Activated CD4-positive, alpha-beta T cell treated with anti-CD3 and anti-CD28 coated beads for 36 hours (primary cell): ENCODE measurements at regions of chr2 and their contacts with region 1.

Region 1: DNA sequence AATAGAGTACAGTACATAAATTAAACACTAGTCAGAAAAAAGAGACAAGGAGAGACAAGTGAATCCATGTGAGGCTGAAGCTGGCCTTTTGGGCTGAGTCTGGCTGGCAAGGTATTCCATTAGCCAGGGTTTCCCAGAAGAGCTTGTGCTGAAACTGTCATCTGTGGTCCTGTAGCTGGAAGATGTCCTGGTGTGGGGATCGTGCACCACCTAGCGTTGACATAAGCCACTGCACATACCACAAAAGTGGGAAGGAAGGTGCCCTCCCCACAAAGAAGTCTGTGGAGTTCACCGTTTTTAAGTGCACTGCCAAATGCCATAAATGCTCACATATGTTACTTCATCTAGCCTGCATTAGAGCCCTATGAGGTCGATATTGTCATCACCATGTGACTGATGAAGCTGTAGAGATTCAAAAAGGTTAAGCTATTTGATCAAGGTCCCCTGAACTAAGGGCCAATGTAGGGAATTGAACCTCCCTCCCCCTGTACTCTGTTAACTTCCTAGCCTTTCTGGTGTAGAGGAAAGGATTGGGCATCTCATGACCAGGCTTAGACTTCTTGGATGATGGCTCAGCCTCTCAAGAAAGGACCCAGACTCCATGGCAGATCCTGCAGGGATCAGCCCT is 31.9 kb upstream of the GALNT14 start:
- DNase-seq: peak; percentile 73
- ATAC-seq: peak; percentile 88
- H3K4me3 Mint-ChIP-seq: no peak overlapping the region
- H3K27ac Mint-ChIP-seq: no peak overlapping the region
- H3K4me1 Mint-ChIP-seq: peaks cover under 1% of the 10 kb centered on the region
- H3K27me3 Mint-ChIP-seq: no peaks in the 10 kb centered on the region

Region 2: GRCh38 chr2:30862054-30862651 is 308.0 kb before region 1 on chr2:
- CTCF ChIA-PET with region 1: interaction called, 29 read pairs
- POLR2A ChIA-PET with region 1: no interaction called
- intact Hi-C with region 1: loop called (anchors 1 kb)
- DNase-seq: peak; percentile 69
- ATAC-seq: no peak
- H3K4me3 Mint-ChIP-seq: no peak overlapping the region
- H3K27ac Mint-ChIP-seq: no peak overlapping the region
- H3K4me1 Mint-ChIP-seq: peaks cover 8% of the 10 kb centered on the region
- H3K27me3 Mint-ChIP-seq: peaks cover 8% of the 10 kb centered on the region

Region 3: GRCh38 chr2:31138037-31138962 is 31.9 kb before region 1 on chr2 and contains the start of gene GALNT14:
- CTCF ChIA-PET with region 1: interaction called, 4 read pairs
- POLR2A ChIA-PET with region 1: no interaction called
- intact Hi-C with region 1: loop called in 1 of 2 experiments (anchors 1 kb)
- DNase-seq: peak; percentile 74
- ATAC-seq: peak; percentile 79
- H3K4me3 Mint-ChIP-seq: peak within 1 kb of the TSS; percentile 64
- H3K27ac Mint-ChIP-seq: no peak within 1 kb of the TSS
- H3K4me1 Mint-ChIP-seq: peaks cover 7% of the 10 kb centered on the region
- H3K27me3 Mint-ChIP-seq: peaks cover 31% of the 10 kb centered on the region
- total RNA-seq, gene GALNT14: 0.48 to 0.83 TPM

Region 4: DNA sequence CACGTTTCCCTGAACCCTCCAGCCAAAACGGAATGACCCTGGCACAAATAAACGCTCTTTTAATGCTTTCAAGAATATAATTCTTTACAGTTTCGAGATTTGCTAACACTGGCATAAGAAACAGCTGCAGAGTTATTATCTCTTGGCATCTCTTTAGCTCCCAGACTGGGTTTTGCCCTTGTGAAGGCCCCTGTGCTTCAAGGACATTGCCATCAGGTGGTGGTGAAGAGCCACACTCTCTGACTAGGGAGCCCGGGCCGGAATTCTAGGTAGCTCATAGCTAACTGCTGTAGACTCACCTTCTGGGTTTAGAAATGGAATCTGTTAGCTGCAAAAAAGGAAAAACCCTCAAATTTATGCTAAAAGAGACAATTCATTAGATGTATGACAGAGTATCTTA is 18.7 kb before region 1 on chr2:
- CTCF ChIA-PET with region 1: interaction called, 12 read pairs
- POLR2A ChIA-PET with region 1: no interaction called
- intact Hi-C with region 1: no loop called
- DNase-seq: no peak
- ATAC-seq: no peak
- H3K4me3 Mint-ChIP-seq: no peak overlapping the region
- H3K27ac Mint-ChIP-seq: no peak overlapping the region
- H3K4me1 Mint-ChIP-seq: no peaks in the 10 kb centered on the region
- H3K27me3 Mint-ChIP-seq: no peaks in the 10 kb centered on the region